K562 (cell line): ENCODE measurements at regions of chr3 and their contacts with region 1.

Region 1: DNA sequence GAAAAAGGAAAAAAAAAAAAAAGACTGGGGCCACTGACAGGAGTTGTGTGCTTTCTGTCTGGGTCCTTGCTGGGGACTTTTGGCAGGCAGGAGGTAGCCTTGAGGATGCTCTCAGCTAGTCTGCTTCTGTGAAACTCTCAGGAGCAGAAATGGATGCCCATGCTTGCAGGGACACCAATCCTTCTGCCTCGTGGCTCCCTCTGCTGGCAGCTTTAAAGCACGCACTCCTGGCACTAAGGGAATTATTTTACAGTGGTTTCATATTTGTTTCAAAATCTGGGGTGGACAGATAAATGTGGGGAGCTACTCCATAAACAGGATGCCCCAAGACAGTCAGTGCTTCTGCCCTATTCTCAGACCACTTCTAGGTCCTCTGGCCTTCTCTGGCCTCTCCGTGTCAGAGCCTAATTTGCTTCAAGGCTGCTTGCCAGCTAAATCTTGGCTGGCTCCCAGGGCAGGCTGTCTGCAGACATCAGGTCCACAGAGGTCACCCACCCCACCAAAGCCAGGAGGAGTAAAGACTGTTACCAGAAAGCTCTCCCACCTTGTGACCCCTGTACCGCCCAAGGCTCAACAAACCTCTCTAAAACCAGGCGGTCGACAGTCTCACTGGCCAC is 17.1 kb downstream of the TRAIP start:
- DNase-seq: peak; percentile 49 to 78 (median 58)
- ATAC-seq: peak; percentile 94
- H3K4me3 ChIP-seq: no peak overlapping the region
- H3K27ac ChIP-seq: no peak overlapping the region
- H3K4me1 ChIP-seq: no peaks in the 10 kb centered on the region; a peak in 1 of 5 replicates
- H3K27me3 ChIP-seq: no peaks in the 10 kb centered on the region
- CTCF ChIP-seq: peak; percentile 77 to 90 (median 82)
- EP300 ChIP-seq: no peak
- POLR2A ChIP-seq: no peak
- RAD21 ChIP-seq: peak; percentile 86 to 88

Region 2: DNA sequence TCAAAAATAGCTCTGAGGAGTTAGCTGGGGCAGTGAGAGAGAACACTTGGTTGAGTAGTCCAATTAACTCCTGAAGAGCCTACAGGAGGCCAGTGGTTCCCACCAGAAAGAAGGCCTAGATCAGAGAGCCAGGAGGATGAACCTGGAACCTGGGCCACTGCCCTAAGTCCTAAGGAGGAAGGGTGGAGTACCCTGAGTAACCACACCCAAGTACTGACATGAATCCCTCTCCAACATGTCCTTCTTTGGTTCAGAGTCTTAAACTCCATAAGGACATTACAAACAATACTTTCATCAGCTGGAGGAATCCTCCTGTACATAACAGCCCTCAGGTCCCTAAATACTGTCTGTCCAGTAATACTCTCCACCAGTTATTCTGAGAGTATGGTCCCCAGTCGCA is 536.7 kb before region 1 on chr3:
- CTCF ChIA-PET with region 1: no interaction called
- POLR2A ChIA-PET with region 1: no interaction called
- in situ Hi-C with region 1: no loop called
- intact Hi-C with region 1: no loop called
- DNase-seq: no peak
- ATAC-seq: no peak
- H3K4me3 ChIP-seq: no peak overlapping the region
- H3K27ac ChIP-seq: no peak overlapping the region
- H3K4me1 ChIP-seq: no peaks in the 10 kb centered on the region
- H3K27me3 ChIP-seq: no peaks in the 10 kb centered on the region
- CTCF ChIP-seq: no peak
- EP300 ChIP-seq: no peak
- POLR2A ChIP-seq: no peak
- RAD21 ChIP-seq: no peak

Region 3: GRCh38 chr3:49647741-49648140 is 191.6 kb before region 1 on chr3:
- CTCF ChIA-PET with region 1: no interaction called
- POLR2A ChIA-PET with region 1: no interaction called
- in situ Hi-C with region 1: no loop called
- intact Hi-C with region 1: no loop called
- DNase-seq: no peak
- ATAC-seq: no peak
- H3K4me3 ChIP-seq: no peak overlapping the region
- H3K27ac ChIP-seq: no peak overlapping the region
- H3K4me1 ChIP-seq: peaks cover 3 to 21% of the 10 kb centered on the region in 2 experiments; a peak in 3 of 5 replicates
- H3K27me3 ChIP-seq: no peaks in the 10 kb centered on the region
- CTCF ChIP-seq: no peak
- EP300 ChIP-seq: no peak
- POLR2A ChIP-seq: no peak
- RAD21 ChIP-seq: no peak

Region 4: DNA sequence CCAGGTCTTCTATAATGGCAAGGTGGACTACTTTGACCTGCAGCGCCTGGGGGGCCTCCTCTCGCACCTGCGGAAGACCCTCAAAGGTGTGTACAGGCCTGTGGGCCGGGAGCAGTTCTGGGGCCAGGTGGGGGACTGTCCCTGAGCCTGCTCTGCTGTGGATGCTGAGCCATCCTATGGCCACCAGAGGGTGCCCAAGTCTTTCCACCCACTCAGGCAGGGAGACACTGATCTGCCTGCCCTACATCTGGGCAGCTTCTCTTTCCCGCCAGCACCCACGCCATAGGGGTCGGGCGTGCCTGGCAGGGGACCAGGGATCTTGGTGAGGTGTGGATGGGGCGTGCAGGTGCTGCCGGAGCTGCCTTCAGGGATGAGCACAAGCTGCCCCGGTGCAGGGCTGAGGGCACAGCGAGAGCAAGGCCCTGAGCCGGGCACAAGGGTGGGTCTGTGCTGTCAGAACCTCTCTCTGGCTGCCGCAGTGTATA is 135.8 kb before region 1 on chr3:
- CTCF ChIA-PET with region 1: interaction called, 16 read pairs
- POLR2A ChIA-PET with region 1: interaction called, 5 read pairs
- in situ Hi-C with region 1: loop called (anchors 5 kb)
- intact Hi-C with region 1: loop called (anchors 1 kb)
- DNase-seq: peak; percentile 60 to 71 (median 64)
- ATAC-seq: peak; percentile 95
- H3K4me3 ChIP-seq: no peak overlapping the region
- H3K27ac ChIP-seq: no peak overlapping the region
- H3K4me1 ChIP-seq: peaks cover 0 to 10% of the 10 kb centered on the region in 2 experiments; a peak in 2 of 5 replicates
- H3K27me3 ChIP-seq: no peaks in the 10 kb centered on the region
- CTCF ChIP-seq: peak; percentile 71 to 76 (median 72)
- EP300 ChIP-seq: no peak
- POLR2A ChIP-seq: no peak
- RAD21 ChIP-seq: peak; percentile 60 to 69

Region 5: GRCh38 chr3:49723628-49724551 is 115.4 kb before region 1 on chr3 and contains the start of gene GMPPB:
- CTCF ChIA-PET with region 1: interaction called, 4 read pairs
- POLR2A ChIA-PET with region 1: interaction called, 3 read pairs
- in situ Hi-C with region 1: no loop called
- intact Hi-C with region 1: loop called (anchors 5 kb)
- DNase-seq: peak; percentile 95 to 96 (median 96)
- ATAC-seq: peak; percentile 95
- H3K4me3 ChIP-seq: peak within 1 kb of the TSS; percentile 99
- H3K27ac ChIP-seq: peak within 1 kb of the TSS; percentile 91
- H3K4me1 ChIP-seq: peaks cover 2 to 39% of the 10 kb centered on the region in 2 experiments; a peak in 4 of 5 replicates
- H3K27me3 ChIP-seq: no peaks in the 10 kb centered on the region
- CTCF ChIP-seq: no peak
- EP300 ChIP-seq: no peak
- POLR2A ChIP-seq: peak; percentile 73
- RAD21 ChIP-seq: no peak
- polyA plus RNA-seq, gene GMPPB: 0.53 to 0.92 TPM

Region 6: GRCh38 chr3:50298836-50299637 is 459.7 kb after region 1 on chr3 and contains the starts of genes HYAL3 and NAA80:
- CTCF ChIA-PET with region 1: no interaction called
- POLR2A ChIA-PET with region 1: no interaction called
- in situ Hi-C with region 1: no loop called
- intact Hi-C with region 1: no loop called
- DNase-seq: peak; percentile 89 to 97 (median 93)
- ATAC-seq: peak; percentile 85
- H3K4me3 ChIP-seq: peak within 1 kb of the TSS; percentile 83
- H3K27ac ChIP-seq: peak within 1 kb of the TSS; percentile 99
- H3K4me1 ChIP-seq: peaks cover 22 to 72% of the 10 kb centered on the region in 2 experiments; a peak in 4 of 5 replicates
- H3K27me3 ChIP-seq: no peaks in the 10 kb centered on the region
- CTCF ChIP-seq: peak; percentile 38 to 44 (median 41); a peak in 4 of 6 replicates
- EP300 ChIP-seq: no peak
- POLR2A ChIP-seq: peak; percentile 76
- RAD21 ChIP-seq: no peak
- polyA plus RNA-seq, gene HYAL3: 0.38 to 1.0 TPM
- polyA plus RNA-seq, gene NAA80: 0.82 to 1.7 TPM